ENCODE measurements at regions of chr2 and their contacts with region 1.

Region 1: DNA sequence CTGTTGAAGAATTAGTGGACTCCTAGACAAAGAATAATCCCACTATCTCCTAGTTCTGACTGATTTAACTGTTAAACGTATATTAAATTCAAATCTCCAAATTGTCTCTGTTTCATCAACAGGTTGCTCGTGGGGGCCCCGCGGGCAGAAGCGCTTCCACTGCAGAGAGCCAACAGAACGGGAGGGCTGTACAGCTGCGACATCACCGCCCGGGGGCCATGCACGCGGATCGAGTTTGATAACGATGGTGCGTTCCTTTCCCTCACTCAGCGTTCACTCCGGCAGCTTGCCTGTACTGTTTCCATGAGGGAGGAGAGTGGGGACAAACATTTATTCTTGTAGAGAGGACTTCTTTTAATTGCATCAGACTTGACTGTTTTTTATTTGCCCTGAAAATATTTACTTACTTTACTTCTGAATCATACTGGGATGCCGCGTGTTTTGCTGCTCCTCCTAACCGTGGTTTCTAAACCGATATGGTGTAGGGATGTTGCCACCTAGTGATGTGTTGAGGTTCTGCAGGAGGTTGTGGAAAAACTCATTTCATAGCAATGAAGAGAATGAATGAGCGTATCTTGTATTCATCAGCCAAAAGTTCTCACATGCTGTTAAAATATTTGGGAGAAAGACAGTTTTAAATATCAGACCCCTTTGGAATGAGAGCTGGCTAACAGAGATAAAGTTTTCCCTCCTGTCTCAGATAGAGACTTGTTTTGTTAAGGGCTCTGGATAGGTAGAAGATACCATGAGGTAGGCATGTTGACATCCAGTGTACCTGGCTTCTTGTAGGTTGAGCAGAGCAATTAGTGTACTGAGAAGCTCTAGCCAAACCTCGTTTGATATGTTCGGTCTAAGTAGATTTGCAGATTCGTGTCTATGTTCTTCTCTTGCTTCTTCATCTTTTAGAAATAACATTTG is 38.3 kb downstream of the ITGA6 start:
- DNase-seq: peak in 8 of 9 donors; percentile 58 to 83 (median 76)
- ATAC-seq: peak; percentile 65
- H3K4me3 ChIP-seq: peak overlapping the region; percentile 68
- H3K4me3 Mint-ChIP-seq: peak overlapping the region; percentile 21 to 93 (median 84)
- H3K27ac ChIP-seq: peak overlapping the region; percentile 69
- H3K27ac Mint-ChIP-seq: peak overlapping the region; percentile 34 to 98 (median 91)
- H3K4me1 ChIP-seq: peaks cover 50 to 54% of the 10 kb centered on the region in 2 donors
- H3K4me1 Mint-ChIP-seq: peaks cover 54 to 97% (median 84%) of the 10 kb centered on the region in 7 donors
- H3K27me3 ChIP-seq: no peaks in the 10 kb centered on the region
- H3K27me3 Mint-ChIP-seq: peaks cover 0 to 2% (median 0%) of the 10 kb centered on the region in 5 donors

Region 2: DNA sequence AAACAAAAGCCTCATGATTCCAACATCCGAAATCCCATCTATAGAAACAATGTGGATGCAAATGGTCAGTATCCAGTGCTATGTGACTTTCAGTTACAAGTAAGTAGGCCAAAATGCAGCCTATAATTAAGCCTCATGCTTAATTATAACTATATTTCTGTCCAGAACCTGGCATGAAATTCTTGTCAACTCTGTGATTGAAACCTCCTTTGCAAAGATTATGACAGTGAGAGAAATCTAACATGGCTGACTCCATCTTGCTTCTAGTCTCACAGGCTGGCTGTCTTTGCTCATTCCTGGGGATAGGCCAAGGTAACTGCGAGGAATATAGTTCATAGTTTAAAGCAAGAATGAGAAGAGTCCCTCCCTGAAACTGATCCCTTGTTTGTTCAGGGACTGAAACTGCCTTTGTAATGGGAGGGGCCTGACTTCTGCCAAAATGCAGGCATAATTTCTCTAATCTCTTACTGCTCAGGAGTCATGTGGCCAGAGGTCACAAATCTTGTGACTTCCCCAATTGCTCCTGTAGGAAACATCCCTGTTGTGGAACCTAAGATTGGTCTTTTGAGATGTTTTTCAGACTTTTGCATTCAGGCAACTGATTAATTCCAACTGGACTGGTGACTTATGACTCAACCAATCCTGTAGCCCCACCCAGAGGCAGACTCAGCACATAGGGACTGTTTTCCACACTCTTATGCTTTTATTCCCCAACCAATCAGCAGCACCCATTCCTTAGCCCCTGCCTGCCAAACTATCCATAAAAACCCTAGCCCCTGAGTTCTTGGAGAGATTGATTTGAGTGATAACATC is 1220.5 kb before region 1 on chr2:
- CTCF ChIA-PET with region 1: no interaction called
- POLR2A ChIA-PET with region 1: no interaction called
- intact Hi-C with region 1: no loop called
- DNase-seq: no peak
- ATAC-seq: no peak
- H3K4me3 ChIP-seq: no peak overlapping the region
- H3K4me3 Mint-ChIP-seq: no peak overlapping the region
- H3K27ac ChIP-seq: no peak overlapping the region
- H3K27ac Mint-ChIP-seq: peak overlapping the region in 1 of 9 donors; percentile 38
- H3K4me1 ChIP-seq: peaks cover 19 to 24% of the 10 kb centered on the region in 2 donors
- H3K4me1 Mint-ChIP-seq: peaks cover 19 to 49% (median 46%) of the 10 kb centered on the region in 7 donors
- H3K27me3 ChIP-seq: no peaks in the 10 kb centered on the region
- H3K27me3 Mint-ChIP-seq: peaks cover 0 to 4% (median 0%) of the 10 kb centered on the region in 5 donors

Region 3: DNA sequence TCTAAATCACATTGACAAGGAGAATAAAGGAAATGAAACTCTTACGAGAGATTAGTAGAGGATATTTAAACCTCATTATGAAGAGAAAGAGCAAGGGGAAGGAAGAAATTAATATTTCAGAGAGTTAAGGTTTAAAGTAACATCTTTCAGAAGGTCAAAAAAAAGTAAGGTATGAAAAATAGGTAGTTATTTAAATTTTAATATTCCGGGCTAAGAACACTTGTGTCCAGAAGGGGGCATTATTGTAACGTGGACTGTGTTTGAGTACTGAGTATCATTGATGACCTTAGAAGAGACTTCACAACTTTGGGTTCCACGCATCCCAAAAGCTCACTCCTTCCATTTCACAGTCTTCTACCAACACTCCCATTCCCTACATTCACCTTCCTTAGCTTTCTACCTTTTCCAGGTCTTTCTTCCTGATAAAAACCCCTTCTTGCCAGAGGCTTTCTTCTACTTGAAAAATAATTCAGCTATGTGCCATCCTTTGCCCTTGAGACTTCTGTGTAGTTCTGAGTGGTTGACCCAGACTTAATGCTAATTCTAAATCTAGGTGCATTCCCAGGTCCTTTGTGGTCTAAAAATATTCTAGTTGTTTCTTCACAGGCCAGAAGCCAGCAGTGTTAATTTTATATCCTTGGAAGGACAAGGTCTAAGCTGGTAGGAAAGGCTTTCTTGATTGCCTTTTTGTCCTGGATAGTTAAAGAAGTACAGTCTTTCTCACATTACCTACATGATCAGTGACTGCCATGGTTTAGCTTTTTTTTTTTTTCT is 761.9 kb before region 1 on chr2:
- CTCF ChIA-PET with region 1: interaction called, 3 read pairs
- POLR2A ChIA-PET with region 1: no interaction called
- intact Hi-C with region 1: loop called (anchors 1 kb)
- DNase-seq: peak in 5 of 9 donors; percentile 10 to 35 (median 22)
- ATAC-seq: peak; percentile 61
- H3K4me3 ChIP-seq: no peak overlapping the region
- H3K4me3 Mint-ChIP-seq: no peak overlapping the region
- H3K27ac ChIP-seq: no peak overlapping the region
- H3K27ac Mint-ChIP-seq: peak overlapping the region in 6 of 9 donors; percentile 43 to 79 (median 66)
- H3K4me1 ChIP-seq: no peaks in the 10 kb centered on the region
- H3K4me1 Mint-ChIP-seq: peaks cover 2 to 34% (median 11%) of the 10 kb centered on the region in 7 donors
- H3K27me3 ChIP-seq: no peaks in the 10 kb centered on the region
- H3K27me3 Mint-ChIP-seq: no peaks in the 10 kb centered on the region

Region 4: DNA sequence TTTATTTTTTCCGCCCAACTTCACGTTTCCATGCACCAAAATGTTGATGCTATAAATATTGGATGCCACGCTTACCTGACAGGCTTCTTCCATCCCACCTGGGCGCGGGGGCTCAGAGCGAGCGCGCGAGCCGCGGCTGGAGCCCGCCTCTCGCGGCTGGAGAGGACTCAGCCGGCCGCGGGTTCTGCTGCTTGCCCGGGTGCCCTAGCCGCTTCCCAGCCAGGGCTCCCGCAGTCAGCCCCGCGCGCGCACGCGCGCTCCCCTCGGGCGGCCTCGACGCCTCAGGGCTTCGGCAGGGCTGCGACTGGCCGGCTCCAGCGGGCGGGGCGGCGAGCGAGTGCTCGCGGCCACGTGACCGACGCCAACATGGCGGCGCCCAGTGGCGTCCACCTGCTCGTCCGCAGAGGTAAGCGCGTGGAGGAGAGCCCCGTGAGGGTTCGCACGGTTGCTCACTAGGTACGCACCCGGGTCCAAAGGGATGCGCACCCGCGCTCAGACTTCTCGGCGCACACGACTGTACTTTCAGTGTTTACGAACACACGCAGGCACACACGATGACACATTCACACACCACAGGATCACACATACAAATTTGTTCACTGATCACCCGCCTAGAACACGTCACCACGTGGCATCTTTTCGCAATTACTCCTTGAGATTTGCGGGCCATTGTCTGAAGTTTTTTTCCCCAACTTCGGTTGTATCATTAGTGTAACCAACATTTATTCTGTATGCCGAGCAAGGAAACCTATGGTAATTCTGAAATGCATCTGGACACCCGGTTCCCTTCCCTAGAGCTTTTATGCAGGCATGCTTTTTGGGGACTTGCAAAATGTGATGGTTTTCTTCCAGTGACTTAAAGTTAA is 465.8 kb before region 1 on chr2 and contains the start of gene METAP1D:
- CTCF ChIA-PET with region 1: no interaction called
- POLR2A ChIA-PET with region 1: no interaction called
- intact Hi-C with region 1: loop called in 1 of 2 experiments (anchors 5 kb)
- DNase-seq: peak; percentile 74 to 92 (median 82)
- ATAC-seq: peak; percentile 98
- H3K4me3 ChIP-seq: peak within 1 kb of the TSS; percentile 99
- H3K4me3 Mint-ChIP-seq: peak within 1 kb of the TSS; percentile 87 to 99 (median 96)
- H3K27ac ChIP-seq: peak within 1 kb of the TSS; percentile 61
- H3K27ac Mint-ChIP-seq: peak within 1 kb of the TSS; percentile 77 to 97 (median 93)
- H3K4me1 ChIP-seq: peaks cover 0 to 5% of the 10 kb centered on the region in 2 donors
- H3K4me1 Mint-ChIP-seq: peaks cover 5 to 24% (median 22%) of the 10 kb centered on the region in 7 donors
- H3K27me3 ChIP-seq: no peaks in the 10 kb centered on the region
- H3K27me3 Mint-ChIP-seq: peaks cover 6 to 23% (median 9%) of the 10 kb centered on the region in 5 donors
- total RNA-seq, gene METAP1D: 5.3 to 12.2 (median 11.6) TPM

Region 5: DNA sequence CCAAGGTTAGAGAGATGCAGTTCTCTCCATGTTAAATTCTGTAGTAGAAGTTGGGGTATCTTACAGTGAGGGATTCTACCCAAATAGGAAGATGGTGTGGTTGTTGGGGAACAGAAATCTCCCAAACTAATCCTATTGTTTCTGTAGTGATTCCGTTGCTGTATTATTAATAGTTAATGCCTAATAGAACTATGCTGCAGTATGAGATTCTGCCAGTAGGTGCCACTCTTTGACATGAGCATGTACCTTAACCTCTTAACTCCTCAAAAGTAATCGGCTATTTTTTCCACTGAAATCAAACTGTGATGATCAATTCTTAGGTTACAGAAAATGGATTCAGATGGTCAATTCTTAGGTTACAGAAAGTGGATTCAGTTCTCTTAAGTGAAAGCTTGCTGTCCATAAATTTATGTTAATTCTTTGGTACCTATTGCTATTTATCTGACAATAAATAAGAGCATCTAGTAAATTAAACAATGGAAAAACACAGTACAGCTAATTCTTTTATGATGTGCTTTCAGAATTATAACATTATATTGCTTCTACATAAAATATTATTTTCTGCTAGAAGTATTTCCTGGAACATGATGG is 265.1 kb before region 1 on chr2:
- CTCF ChIA-PET with region 1: interaction called, 5 read pairs
- POLR2A ChIA-PET with region 1: no interaction called
- intact Hi-C with region 1: loop called in 1 of 2 experiments (anchors 1 kb)
- DNase-seq: peak in 1 of 9 donors; percentile 9
- ATAC-seq: no peak
- H3K4me3 ChIP-seq: no peak overlapping the region
- H3K4me3 Mint-ChIP-seq: no peak overlapping the region
- H3K27ac ChIP-seq: no peak overlapping the region
- H3K27ac Mint-ChIP-seq: no peak overlapping the region
- H3K4me1 ChIP-seq: no peaks in the 10 kb centered on the region
- H3K4me1 Mint-ChIP-seq: peaks cover 4 to 24% (median 13%) of the 10 kb centered on the region in 7 donors
- H3K27me3 ChIP-seq: no peaks in the 10 kb centered on the region
- H3K27me3 Mint-ChIP-seq: peaks cover 0 to 8% (median 0%) of the 10 kb centered on the region in 5 donors

Region 6: DNA sequence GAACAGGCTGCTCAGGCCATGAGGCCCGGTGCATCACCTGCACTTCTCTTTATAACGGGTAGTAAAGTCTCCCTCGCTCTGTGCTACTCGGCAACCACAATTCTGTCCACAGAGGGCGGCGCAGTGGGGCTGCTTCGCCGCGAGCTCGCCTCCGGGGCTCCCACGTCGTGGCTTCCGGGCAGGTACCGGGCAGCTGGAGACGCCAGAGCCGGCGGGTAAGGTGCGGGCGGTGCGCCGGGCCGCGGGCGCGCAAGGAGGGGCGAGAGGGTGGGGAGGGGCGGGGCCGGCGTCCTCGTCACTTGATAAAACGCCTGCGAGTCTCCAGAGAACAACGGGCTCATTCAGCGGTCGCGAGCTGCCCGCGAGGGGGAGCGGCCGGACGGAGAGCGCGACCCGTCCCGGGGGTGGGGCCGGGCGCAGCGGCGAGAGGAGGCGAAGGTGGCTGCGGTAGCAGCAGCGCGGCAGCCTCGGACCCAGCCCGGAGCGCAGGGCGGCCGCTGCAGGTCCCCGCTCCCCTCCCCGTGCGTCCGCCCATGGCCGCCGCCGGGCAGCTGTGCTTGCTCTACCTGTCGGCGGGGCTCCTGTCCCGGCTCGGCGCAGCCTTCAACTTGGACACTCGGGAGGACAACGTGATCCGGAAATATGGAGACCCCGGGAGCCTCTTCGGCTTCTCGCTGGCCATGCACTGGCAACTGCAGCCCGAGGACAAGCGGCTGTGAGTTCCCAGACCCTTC is 38.3 kb before region 1 on chr2 and contains the start of gene ITGA6:
- CTCF ChIA-PET with region 1: interaction called, 673 read pairs
- POLR2A ChIA-PET with region 1: interaction called, 862 read pairs
- intact Hi-C with region 1: loop called (anchors 1 kb)
- DNase-seq: peak; percentile 55 to 84 (median 80)
- ATAC-seq: peak; percentile 81
- H3K4me3 ChIP-seq: peak within 1 kb of the TSS; percentile 76
- H3K4me3 Mint-ChIP-seq: peak within 1 kb of the TSS in 7 of 10 donors; percentile 92 to 100 (median 98)
- H3K27ac ChIP-seq: peak within 1 kb of the TSS; percentile 76
- H3K27ac Mint-ChIP-seq: peak within 1 kb of the TSS in 8 of 9 donors; percentile 90 to 96 (median 95)
- H3K4me1 ChIP-seq: peaks cover 17 to 44% of the 10 kb centered on the region in 2 donors
- H3K4me1 Mint-ChIP-seq: peaks cover 21 to 65% (median 46%) of the 10 kb centered on the region in 7 donors
- H3K27me3 ChIP-seq: no peaks in the 10 kb centered on the region
- H3K27me3 Mint-ChIP-seq: peaks cover 0 to 82% (median 0%) of the 10 kb centered on the region in 5 donors
- total RNA-seq, gene ITGA6: 13.1 to 179 (median 135) TPM

Region 7: DNA sequence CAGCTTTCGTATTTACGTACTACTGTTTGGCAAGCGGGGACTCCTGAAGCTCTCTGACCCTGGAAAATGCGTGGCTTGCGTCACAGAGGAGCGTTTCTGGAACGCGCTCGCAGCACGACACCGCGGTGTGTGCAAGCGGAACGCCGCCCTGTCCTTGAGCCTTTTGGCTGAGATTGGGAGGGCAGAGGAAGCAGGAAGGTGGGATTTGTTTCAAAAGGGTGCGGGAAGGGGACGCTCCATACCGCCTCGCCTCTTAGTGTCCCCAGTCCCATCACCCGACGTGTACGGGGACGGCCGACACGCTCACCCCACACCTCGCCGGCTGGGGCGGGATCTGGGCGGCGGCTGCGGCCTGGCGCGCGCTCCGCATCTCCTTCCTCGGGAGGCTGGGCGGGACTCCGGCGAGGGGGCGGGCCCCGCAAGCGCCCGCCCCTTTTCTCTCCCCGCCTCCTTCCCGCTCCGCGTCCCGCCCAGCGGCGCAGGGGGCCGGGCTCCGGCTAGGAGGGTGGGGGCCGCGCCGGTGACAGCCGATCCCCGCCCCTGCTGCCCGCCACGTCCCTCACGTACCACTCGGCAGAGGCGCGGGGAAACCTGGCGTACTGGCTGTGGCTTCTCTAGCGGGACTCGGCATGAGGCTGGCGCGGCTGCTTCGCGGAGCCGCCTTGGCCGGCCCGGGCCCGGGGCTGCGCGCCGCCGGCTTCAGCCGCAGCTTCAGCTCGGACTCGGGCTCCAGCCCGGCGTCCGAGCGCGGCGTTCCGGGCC is 90.0 kb after region 1 on chr2 and contains the start of gene PDK1:
- CTCF ChIA-PET with region 1: interaction called, 4 read pairs
- POLR2A ChIA-PET with region 1: interaction called, 5 read pairs
- intact Hi-C with region 1: loop called in 1 of 2 experiments (anchors 1 kb)
- DNase-seq: peak; percentile 89 to 95 (median 94)
- ATAC-seq: peak; percentile 97
- H3K4me3 ChIP-seq: peak within 1 kb of the TSS; percentile 84
- H3K4me3 Mint-ChIP-seq: peak within 1 kb of the TSS; percentile 88 to 99 (median 93)
- H3K27ac ChIP-seq: peak within 1 kb of the TSS; percentile 98
- H3K27ac Mint-ChIP-seq: peak within 1 kb of the TSS; percentile 86 to 97 (median 95)
- H3K4me1 ChIP-seq: peaks cover 10 to 29% of the 10 kb centered on the region in 2 donors
- H3K4me1 Mint-ChIP-seq: peaks cover 37 to 72% (median 64%) of the 10 kb centered on the region in 7 donors
- H3K27me3 ChIP-seq: no peaks in the 10 kb centered on the region
- H3K27me3 Mint-ChIP-seq: peaks cover 0 to 5% (median 0%) of the 10 kb centered on the region in 5 donors
- total RNA-seq, gene PDK1: 56.0 to 70.6 (median 66.6) TPM